A673 (cell line): ENCODE measurements at regions of chr13 and their contacts with region 1.

Region 1: GRCh38 chr13:110915057-110915873 is at the start of gene ANKRD10:
- DNase-seq: peak; percentile 98
- H3K4me3 ChIP-seq: peak within 1 kb of the TSS; percentile 99
- H3K27ac ChIP-seq: peak within 1 kb of the TSS; percentile 98
- H3K4me1 ChIP-seq: peaks cover 10% of the 10 kb centered on the region
- H3K27me3 ChIP-seq: no peaks in the 10 kb centered on the region
- CTCF ChIP-seq: peak; percentile 80
- total RNA-seq, gene ANKRD10: 91.1 and 96.2 TPM in 2 replicates

Region 2: GRCh38 chr13:110593430-110594130 is 321.7 kb before region 1 on chr13:
- CTCF ChIA-PET with region 1: no interaction called
- POLR2A ChIA-PET with region 1: no interaction called
- intact Hi-C with region 1: loop called (anchors 10 kb)
- DNase-seq: peak; percentile 80
- H3K4me3 ChIP-seq: no peak overlapping the region
- H3K27ac ChIP-seq: no peak overlapping the region
- H3K4me1 ChIP-seq: no peaks in the 10 kb centered on the region
- H3K27me3 ChIP-seq: no peaks in the 10 kb centered on the region
- CTCF ChIP-seq: peak; percentile 78

Region 3: GRCh38 chr13:110680851-110681250 is 234.4 kb before region 1 on chr13:
- CTCF ChIA-PET with region 1: no interaction called
- POLR2A ChIA-PET with region 1: no interaction called
- intact Hi-C with region 1: no loop called
- DNase-seq: peak; percentile 50
- H3K4me3 ChIP-seq: no peak overlapping the region
- H3K27ac ChIP-seq: no peak overlapping the region
- H3K4me1 ChIP-seq: no peaks in the 10 kb centered on the region
- H3K27me3 ChIP-seq: no peaks in the 10 kb centered on the region
- CTCF ChIP-seq: peak; percentile 47

Region 4: DNA sequence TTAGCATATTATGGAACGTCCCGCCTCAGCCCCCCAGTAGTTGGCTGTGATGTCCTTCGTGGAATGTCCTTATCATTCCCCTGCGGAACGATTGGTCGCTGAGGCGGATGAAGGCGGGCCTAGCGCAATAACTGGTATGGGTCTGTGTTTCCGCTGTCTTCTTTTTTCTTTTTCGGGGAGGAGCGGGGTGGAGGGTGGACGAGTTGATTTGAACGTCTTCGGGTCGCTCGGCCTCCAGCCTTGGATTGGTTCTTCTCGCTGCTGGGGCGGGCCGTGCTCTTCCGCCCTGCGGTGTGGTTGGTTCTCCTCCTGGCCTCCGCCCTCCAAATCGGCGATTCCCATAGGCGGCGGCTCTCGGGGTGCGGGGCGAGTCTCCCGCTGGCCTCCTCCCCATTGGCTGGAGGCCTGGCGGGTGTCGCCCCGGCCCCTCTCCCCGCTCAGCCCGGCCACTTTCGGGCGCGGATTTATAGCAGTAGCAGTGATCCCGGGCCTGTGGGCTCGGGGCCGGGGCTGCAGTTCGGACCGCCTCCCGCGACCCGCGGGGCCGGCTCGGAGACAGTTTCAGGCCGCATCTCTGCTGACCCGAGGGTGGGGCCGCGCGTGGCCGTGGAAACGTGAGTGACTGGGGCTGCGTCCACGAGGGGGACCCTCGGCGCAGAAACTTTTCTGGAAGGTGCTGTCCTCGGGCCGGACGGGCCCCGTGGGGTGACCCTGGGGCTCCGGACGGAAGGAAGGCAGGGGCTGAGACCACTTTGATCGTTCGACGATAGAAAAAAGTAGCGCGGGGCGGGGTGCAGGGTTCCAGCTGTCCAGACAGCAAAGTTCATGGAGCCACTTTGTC is 199.7 kb before region 1 on chr13:
- CTCF ChIA-PET with region 1: no interaction called
- POLR2A ChIA-PET with region 1: no interaction called
- intact Hi-C with region 1: loop called (anchors 2 kb)
- DNase-seq: peak; percentile 100
- H3K4me3 ChIP-seq: peak overlapping the region; percentile 95
- H3K27ac ChIP-seq: peak overlapping the region; percentile 99
- H3K4me1 ChIP-seq: peaks cover 4% of the 10 kb centered on the region
- H3K27me3 ChIP-seq: no peaks in the 10 kb centered on the region
- CTCF ChIP-seq: peak; percentile 28; the same call in 1 of the 2 replicates

Region 5: GRCh38 chr13:111216166-111216960 is 301.1 kb after region 1 on chr13:
- CTCF ChIA-PET with region 1: no interaction called
- POLR2A ChIA-PET with region 1: no interaction called
- intact Hi-C with region 1: loop called (anchors 10 kb)
- DNase-seq: peak; percentile 27
- H3K4me3 ChIP-seq: no peak overlapping the region
- H3K27ac ChIP-seq: no peak overlapping the region
- H3K4me1 ChIP-seq: peaks cover 8% of the 10 kb centered on the region
- H3K27me3 ChIP-seq: no peaks in the 10 kb centered on the region
- CTCF ChIP-seq: peak; percentile 51